Activated CD4-positive, alpha-beta memory T cell treated with anti-CD3 and anti-CD28 coated beads for 36 hours (primary cell): ENCODE measurements at regions of chr1 and their contacts with region 1.

Region 1: DNA sequence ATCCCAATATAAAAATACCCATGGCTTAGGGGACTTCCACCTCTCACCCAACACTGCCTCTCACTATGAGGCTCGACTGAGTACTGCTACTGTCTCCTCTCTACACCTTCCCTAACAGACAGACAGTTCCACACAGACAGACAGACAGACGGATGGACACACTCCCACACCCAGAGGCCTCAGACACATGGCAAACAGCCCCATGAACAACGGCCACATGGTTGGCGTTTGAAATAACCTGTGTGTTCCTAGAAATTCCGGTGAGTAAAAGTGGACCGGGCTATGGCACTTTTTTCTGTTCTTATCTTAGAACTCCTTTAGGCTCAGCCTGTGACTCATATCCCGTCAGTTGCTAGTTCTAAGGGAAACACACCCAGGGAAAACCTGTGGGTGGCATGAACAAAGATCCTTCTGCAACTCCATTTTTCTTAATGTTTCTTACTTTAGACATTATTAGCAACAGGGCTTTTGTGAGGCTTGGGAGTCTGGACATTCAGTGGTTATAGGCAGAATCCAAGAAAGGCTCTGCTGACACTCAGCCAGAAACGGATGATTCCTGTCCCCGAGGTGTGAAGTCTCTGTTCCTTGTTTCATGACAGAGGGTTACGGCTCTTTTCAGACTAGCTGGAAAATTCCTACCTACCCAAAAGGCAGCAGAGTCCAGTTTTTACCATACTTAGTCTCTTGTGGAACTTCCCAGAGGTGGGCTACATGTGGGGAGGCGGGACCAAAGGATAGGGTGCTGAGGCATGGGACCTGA is 90.5 kb upstream of the TLR5 start:
- DNase-seq: peak; percentile 40
- H3K4me3 Mint-ChIP-seq: no peak overlapping the region
- H3K27ac Mint-ChIP-seq: peak overlapping the region; percentile 35
- H3K4me1 Mint-ChIP-seq: peaks cover 55% of the 10 kb centered on the region
- H3K27me3 Mint-ChIP-seq: no peaks in the 10 kb centered on the region

Region 2: DNA sequence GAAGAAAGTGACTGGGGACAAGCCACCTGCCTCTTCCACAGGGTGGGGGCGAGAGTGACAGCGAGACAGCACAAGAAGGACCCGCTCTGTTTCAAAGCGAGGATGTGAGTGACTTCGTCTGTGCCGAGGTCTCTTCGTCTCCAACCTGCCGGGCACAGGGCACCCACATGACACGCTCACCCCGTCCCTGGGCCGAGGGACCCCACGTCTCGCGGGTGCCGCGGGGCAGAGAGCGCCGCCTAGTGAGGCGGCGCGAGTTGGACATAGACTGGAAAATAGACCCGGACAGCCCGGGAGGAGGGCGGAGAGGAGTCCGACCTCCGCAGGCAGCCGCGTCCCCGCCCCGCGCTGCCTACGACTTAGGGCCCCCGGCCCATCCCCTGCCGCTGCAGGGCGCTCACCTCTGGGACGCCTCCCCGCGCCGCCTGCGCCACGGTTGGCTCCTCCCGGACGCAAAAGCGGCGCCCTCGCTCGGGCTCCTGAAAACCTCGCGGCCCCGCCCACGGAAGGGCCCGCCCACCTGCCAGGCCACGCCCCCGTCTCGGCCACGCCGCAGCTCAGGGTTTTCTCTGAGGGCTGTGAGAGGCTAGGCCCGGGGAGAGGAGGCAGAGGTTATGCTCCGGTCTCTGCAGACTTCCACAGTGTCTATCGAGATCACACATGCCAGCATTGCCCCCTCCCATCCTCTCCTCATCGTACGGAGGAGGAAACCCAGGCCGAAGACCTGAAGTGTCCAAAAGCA is 90.6 kb before region 1 on chr1 and contains the start of gene TLR5:
- CTCF ChIA-PET with region 1: interaction called, 3 read pairs
- POLR2A ChIA-PET with region 1: no interaction called
- intact Hi-C with region 1: loop called (anchors 5 kb)
- DNase-seq: peak; percentile 93
- H3K4me3 Mint-ChIP-seq: peak within 1 kb of the TSS; percentile 63
- H3K27ac Mint-ChIP-seq: peak within 1 kb of the TSS; percentile 9
- H3K4me1 Mint-ChIP-seq: peaks cover 19% of the 10 kb centered on the region
- H3K27me3 Mint-ChIP-seq: no peaks in the 10 kb centered on the region
- total RNA-seq, gene TLR5: 0.29 to 0.48 TPM

Region 3: DNA sequence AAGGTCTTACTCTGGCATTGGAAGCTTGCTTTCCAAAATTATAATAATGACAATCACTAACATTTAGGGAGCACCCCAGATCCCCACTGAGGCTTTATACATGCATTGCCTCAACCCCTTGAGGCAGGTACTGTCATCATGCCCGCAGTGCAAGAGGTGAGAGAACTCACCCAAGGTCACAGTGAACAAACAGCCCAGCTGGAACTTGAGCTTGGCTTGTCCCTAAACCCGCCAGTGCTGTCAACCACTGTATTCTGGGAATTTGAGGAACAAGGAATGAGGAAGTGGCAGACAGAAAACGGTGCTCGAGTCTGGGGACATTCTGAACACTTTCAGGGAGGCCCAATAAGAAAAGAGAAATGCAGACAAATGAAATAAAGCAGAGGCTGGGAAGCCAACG is 55.9 kb before region 1 on chr1:
- CTCF ChIA-PET with region 1: no interaction called
- POLR2A ChIA-PET with region 1: no interaction called
- intact Hi-C with region 1: no loop called
- DNase-seq: no peak
- H3K4me3 Mint-ChIP-seq: no peak overlapping the region
- H3K27ac Mint-ChIP-seq: no peak overlapping the region
- H3K4me1 Mint-ChIP-seq: peaks cover 9% of the 10 kb centered on the region
- H3K27me3 Mint-ChIP-seq: peaks cover 4% of the 10 kb centered on the region

Region 4: GRCh38 chr1:223244366-223245103 is 10.9 kb after region 1 on chr1:
- CTCF ChIA-PET with region 1: interaction called, 3 read pairs
- POLR2A ChIA-PET with region 1: no interaction called
- intact Hi-C with region 1: loop called (anchors 1 kb)
- DNase-seq: peak; percentile 52
- H3K4me3 Mint-ChIP-seq: no peak overlapping the region
- H3K27ac Mint-ChIP-seq: peak overlapping the region; percentile 59
- H3K4me1 Mint-ChIP-seq: peaks cover 31% of the 10 kb centered on the region
- H3K27me3 Mint-ChIP-seq: no peaks in the 10 kb centered on the region

Region 5: DNA sequence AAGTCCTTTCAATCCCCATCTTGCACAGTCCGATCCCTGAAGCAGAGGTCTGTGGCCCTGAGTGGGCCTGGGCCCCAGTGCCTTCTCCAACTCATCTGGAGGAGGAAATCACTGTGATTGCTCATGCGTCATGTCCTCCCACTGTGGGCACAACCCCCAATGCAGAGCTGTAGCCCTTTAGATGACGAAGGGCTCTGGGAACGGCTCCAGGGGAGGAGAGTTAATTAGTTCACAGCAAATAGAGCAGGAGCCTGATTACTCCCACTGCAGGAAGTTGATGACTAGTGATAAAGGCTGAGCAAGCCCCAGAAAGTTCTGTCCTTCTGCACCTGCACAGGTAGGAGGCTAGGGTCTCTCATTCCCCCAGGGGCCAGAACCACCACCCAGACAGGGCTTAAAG is 271.2 kb after region 1 on chr1:
- CTCF ChIA-PET with region 1: no interaction called
- POLR2A ChIA-PET with region 1: no interaction called
- intact Hi-C with region 1: no loop called
- DNase-seq: no peak
- H3K4me3 Mint-ChIP-seq: no peak overlapping the region
- H3K27ac Mint-ChIP-seq: no peak overlapping the region
- H3K4me1 Mint-ChIP-seq: peaks cover 7% of the 10 kb centered on the region
- H3K27me3 Mint-ChIP-seq: no peaks in the 10 kb centered on the region